Activated CD4-positive, alpha-beta memory T cell treated with anti-CD3 and anti-CD28 coated beads for 36 hours (primary cell): ENCODE measurements at regions of chr1 and their contacts with region 1.

Region 1: GRCh38 chr1:40040511-40041465 is at the start of gene CAP1:
- DNase-seq: peak; percentile 100
- H3K4me3 Mint-ChIP-seq: peak within 1 kb of the TSS; percentile 92
- H3K27ac Mint-ChIP-seq: peak within 1 kb of the TSS; percentile 98
- H3K4me1 Mint-ChIP-seq: peaks cover 54% of the 10 kb centered on the region
- H3K27me3 Mint-ChIP-seq: no peaks in the 10 kb centered on the region
- total RNA-seq, gene CAP1: 616 to 633 TPM

Region 2: GRCh38 chr1:39954816-39955546 is 85.8 kb before region 1 on chr1 and contains the start of gene MFSD2A:
- CTCF ChIA-PET with region 1: no interaction called
- POLR2A ChIA-PET with region 1: interaction called, 4 read pairs
- intact Hi-C with region 1: loop called (anchors 5 kb)
- DNase-seq: peak; percentile 94
- H3K4me3 Mint-ChIP-seq: peak within 1 kb of the TSS; percentile 84
- H3K27ac Mint-ChIP-seq: peak within 1 kb of the TSS; percentile 75
- H3K4me1 Mint-ChIP-seq: peaks cover 30% of the 10 kb centered on the region
- H3K27me3 Mint-ChIP-seq: no peaks in the 10 kb centered on the region
- total RNA-seq, gene MFSD2A: 6.0 to 7.5 TPM

Region 3: DNA sequence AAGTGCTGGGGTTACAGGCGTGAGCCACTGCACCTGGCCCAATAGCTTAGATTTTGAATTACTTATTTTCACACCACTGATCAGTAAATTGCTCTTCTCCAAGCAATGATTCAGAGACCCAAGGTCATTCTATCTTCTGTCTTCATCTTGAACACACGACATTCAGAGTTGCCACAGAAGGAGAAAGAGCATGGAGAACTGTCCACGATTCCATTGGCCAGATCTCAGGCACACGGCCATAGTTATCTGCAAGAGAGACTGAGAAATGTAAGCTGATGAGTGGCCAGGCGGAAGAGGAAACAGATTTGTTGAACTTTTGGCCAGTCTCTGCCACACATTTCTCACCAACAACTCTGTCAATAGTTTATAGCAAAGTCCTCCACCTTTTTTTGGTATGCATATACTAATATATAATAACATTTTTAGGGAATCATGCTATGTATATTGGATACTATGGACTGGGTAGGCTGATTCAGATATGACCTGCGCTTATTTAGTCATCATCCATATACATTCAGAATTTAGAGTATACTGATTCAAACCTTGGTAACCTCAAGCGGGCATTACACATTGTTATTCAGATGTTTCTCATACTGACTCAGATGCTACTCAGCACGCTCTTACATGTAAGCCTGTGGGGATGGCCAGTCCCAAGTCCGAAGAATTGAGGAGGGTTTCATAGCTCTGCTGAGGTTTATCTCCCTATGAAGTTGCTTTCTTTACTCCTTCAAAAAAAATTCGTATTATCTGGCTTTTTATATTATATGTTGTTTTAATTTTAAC is 25.8 kb before region 1 on chr1:
- CTCF ChIA-PET with region 1: interaction called, 5 read pairs
- POLR2A ChIA-PET with region 1: no interaction called
- intact Hi-C with region 1: loop called (anchors 1 kb)
- DNase-seq: peak; percentile 38
- H3K4me3 Mint-ChIP-seq: no peak overlapping the region
- H3K27ac Mint-ChIP-seq: no peak overlapping the region
- H3K4me1 Mint-ChIP-seq: peaks cover 22% of the 10 kb centered on the region
- H3K27me3 Mint-ChIP-seq: no peaks in the 10 kb centered on the region

Region 4: DNA sequence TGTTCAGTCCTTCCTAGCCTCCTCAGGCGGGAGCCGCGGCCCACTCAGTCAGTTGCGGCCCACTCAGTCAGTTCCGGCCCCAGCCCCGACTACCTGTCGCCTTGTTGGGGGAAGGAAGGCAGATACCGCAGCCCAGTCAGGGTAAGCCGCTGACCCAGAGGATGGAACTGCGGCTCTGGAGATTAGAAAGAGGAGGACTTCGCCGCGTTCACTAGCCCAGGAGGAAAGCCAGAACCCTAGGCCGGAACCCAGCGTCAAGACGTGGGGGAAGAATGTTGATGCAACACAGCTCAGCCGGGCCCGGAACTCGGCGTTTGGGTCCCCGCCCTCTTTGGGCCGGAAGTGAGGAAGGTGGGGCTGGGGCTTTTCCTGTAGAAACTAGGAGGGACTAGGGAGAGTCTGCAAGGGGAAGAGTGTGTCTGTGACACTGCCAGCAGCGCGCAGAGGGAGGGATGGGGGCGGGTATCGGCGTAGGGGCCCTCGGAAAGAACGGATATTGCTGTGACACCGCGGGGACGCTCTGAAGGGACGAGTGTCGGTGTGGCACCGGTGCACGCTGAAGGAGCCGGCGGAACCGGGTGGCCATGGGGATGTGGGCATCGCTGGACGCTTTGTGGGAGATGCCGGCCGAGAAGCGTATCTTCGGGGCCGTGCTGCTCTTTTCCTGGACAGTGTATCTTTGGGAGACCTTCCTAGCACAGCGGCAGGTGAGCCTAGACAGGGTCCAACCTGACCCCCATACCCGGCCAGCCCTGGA is 217.1 kb after region 1 on chr1 and contains the start of gene ZMPSTE24:
- CTCF ChIA-PET with region 1: no interaction called
- POLR2A ChIA-PET with region 1: interaction called, 6 read pairs
- intact Hi-C with region 1: loop called (anchors 5 kb)
- DNase-seq: peak; percentile 98
- H3K4me3 Mint-ChIP-seq: peak within 1 kb of the TSS; percentile 86
- H3K27ac Mint-ChIP-seq: peak within 1 kb of the TSS; percentile 97
- H3K4me1 Mint-ChIP-seq: peaks cover 54% of the 10 kb centered on the region
- H3K27me3 Mint-ChIP-seq: no peaks in the 10 kb centered on the region
- total RNA-seq, gene ZMPSTE24: 29.5 to 30.5 TPM

Region 5: DNA sequence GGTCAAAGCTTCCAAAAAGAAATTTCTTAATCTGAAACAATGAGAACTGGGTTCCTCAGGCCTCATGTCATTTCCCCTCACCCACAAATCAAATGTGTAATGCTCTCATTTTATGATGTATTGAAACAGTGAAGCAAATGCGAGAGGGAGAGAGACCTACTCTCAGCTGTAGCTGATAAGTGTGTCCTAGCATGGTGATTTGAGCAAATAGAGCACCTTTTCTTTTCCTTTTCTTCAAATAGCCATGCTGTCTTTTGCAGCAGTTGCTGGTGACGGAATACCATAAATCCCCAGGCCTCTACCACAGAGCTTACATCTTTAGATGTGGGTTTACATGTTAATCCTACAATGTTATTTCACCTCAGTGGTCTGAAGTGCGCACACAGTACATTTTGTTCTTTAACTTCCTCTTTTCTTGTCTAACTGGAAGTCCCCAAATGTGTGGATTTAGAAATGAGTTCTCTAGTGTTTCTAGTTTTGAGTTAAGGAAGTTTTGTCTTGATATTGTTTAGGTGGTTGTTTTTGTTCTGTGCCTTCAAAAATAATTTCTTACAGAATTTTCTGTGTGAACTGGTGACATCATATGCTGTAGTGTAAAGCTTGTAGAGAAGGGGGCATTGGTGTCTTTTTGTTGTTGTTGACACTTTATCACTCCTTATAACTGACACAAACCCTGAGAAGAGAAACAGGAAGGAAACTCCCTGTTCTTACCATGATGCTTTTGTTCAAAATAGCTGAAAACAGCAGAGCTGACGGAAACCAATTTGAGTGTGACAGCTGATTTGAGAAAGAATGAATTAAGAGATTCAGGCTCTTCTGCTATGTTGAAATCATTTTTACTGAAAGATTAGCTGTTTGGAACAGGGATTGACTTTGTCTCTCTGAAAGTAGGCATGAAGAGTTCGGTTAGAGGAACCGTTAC is 344.9 kb after region 1 on chr1:
- CTCF ChIA-PET with region 1: no interaction called
- POLR2A ChIA-PET with region 1: no interaction called
- intact Hi-C with region 1: loop called (anchors 5 kb)
- DNase-seq: peak; percentile 77
- H3K4me3 Mint-ChIP-seq: peak overlapping the region; percentile 81
- H3K27ac Mint-ChIP-seq: peak overlapping the region; percentile 100
- H3K4me1 Mint-ChIP-seq: peaks cover 90% of the 10 kb centered on the region
- H3K27me3 Mint-ChIP-seq: no peaks in the 10 kb centered on the region